Adrenal gland (tissue), 19 donors: ENCODE measurements at regions of chr18 and their contacts with region 1.

Region 1: GRCh38 chr18:43830947-43831346 is 553.7 kb upstream of the SYT4 start:
- DNase-seq: no peak
- H3K4me3 ChIP-seq: no peak overlapping the region
- H3K27ac ChIP-seq: no peak overlapping the region
- H3K4me1 ChIP-seq: no peaks in the 10 kb centered on the region
- H3K27me3 ChIP-seq: no peaks in the 10 kb centered on the region
- CTCF ChIP-seq: no peak
- POLR2A ChIP-seq: no peak

Region 2: GRCh38 chr18:43705850-43706249 is 125.1 kb before region 1 on chr18:
- intact Hi-C with region 1: no loop called
- DNase-seq: no peak
- H3K4me3 ChIP-seq: no peak overlapping the region
- H3K27ac ChIP-seq: no peak overlapping the region
- H3K4me1 ChIP-seq: no peaks in the 10 kb centered on the region
- H3K27me3 ChIP-seq: no peaks in the 10 kb centered on the region
- CTCF ChIP-seq: no peak
- POLR2A ChIP-seq: no peak

Region 3: GRCh38 chr18:43952398-43952797 is 121.5 kb after region 1 on chr18:
- intact Hi-C with region 1: no loop called
- DNase-seq: no peak
- H3K4me3 ChIP-seq: no peak overlapping the region
- H3K27ac ChIP-seq: no peak overlapping the region
- H3K4me1 ChIP-seq: no peaks in the 10 kb centered on the region
- H3K27me3 ChIP-seq: no peaks in the 10 kb centered on the region
- CTCF ChIP-seq: no peak
- POLR2A ChIP-seq: no peak

Region 4: GRCh38 chr18:44458777-44459176 is 627.8 kb after region 1 on chr18:
- intact Hi-C with region 1: loop called in 1 of 2 experiments (anchors 10 kb)
- DNase-seq: no peak
- H3K4me3 ChIP-seq: no peak overlapping the region
- H3K27ac ChIP-seq: no peak overlapping the region
- H3K4me1 ChIP-seq: no peaks in the 10 kb centered on the region
- H3K27me3 ChIP-seq: no peaks in the 10 kb centered on the region
- CTCF ChIP-seq: no peak
- POLR2A ChIP-seq: no peak